HCT116 (cell line): ENCODE measurements at regions of chr14 and their contacts with region 1.

Region 1: GRCh38 chr14:21557084-21557901 is 22.6 kb downstream of the OR10G3 start:
- DNase-seq: peak; percentile 83
- ATAC-seq: peak; percentile 87
- H3K4me3 ChIP-seq: peak overlapping the region; percentile 10 to 47
- H3K27ac ChIP-seq: no peak overlapping the region
- H3K4me1 ChIP-seq: peaks cover 5 to 9% of the 10 kb centered on the region in 2 experiments; a peak in 3 of 4 replicates
- H3K27me3 ChIP-seq: no peaks in the 10 kb centered on the region
- CTCF ChIP-seq: peak; percentile 56 to 90 (median 74); a peak in 5 of 6 replicates
- POLR2A ChIP-seq: no peak
- RAD21 ChIP-seq: peak; percentile 77

Region 2: DNA sequence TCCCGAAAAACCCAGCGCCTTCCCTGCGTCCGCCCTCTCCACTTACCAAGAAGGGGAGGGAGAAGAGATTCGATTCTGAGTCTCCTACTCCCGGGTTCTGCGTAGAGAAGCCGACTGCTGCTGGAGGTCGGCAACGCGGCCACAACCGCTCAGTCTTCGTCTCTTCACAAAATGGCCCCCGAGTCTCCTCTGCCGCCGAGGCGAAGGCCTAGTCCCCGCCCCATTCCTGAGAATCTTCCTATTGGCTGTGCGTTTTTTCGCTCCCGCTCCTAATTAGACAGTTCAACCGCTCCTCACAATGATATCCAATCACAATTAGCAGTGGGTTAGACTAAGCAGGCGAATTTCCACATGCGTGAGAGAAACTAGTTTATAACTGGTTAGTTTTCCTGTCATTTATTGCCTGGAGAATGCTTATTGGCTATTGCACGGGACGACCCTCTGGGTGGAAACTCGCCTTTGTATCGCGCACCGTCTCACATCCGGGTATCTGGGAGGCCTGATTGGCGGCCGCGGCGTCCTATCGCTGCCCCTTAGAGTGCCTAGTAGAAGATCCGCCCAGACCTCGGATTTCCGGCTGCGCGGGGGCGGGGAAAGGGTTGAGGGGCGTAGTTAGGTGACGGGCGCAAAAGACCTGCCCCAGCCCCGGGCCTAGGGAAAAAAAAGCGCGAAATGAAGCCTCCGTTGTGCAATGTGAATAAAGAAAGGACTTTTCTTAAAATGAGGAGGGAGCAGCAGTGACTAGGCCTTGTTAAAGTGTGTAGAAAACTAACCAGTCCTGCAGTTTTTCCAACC is 287.8 kb before region 1 on chr14 and contains the start of gene HNRNPC:
- CTCF ChIA-PET with region 1: no interaction called
- POLR2A ChIA-PET with region 1: no interaction called
- RAD21 ChIA-PET with region 1: interaction called in 1 of 2 experiments, 14 read pairs
- intact Hi-C with region 1: no loop called
- DNase-seq: peak; percentile 100
- ATAC-seq: peak; percentile 93
- H3K4me3 ChIP-seq: peak within 1 kb of the TSS; percentile 91 to 98
- H3K27ac ChIP-seq: peak within 1 kb of the TSS; percentile 65
- H3K4me1 ChIP-seq: peaks cover 14 to 44% of the 10 kb centered on the region in 2 experiments
- H3K27me3 ChIP-seq: no peaks in the 10 kb centered on the region
- CTCF ChIP-seq: no peak
- POLR2A ChIP-seq: peak; percentile 88
- RAD21 ChIP-seq: no peak
- total RNA-seq, gene HNRNPC: 843 TPM